Body of pancreas (tissue), 4 donors: ENCODE measurements at regions of chr9 and their contacts with region 1.

Region 1: DNA sequence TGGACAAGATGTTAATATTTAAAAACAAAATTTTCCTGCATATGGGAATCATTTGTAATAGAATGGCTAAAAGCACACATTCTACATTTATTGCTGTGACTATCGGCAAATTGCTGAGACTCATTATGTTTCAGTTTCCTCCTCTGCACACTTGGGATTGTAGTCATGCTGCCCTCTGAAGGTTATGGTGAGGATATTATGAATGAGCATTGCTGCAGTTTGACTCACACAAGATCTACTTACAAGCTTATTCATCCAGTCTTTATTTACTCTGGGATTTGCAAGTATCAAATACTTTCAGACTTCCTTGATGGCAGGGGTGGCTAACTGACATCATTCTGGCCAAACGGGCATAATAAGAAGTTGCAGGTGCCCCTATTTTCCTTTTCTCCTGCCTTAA is 9.5 kb upstream of the NFIL3 start:
- DNase-seq: peak in 1 of 4 donors; percentile 64
- ATAC-seq: peak; percentile 90
- H3K4me3 ChIP-seq: no peak overlapping the region
- H3K27ac ChIP-seq: no peak overlapping the region
- H3K4me1 ChIP-seq: no peaks in the 10 kb centered on the region
- H3K27me3 ChIP-seq: no peaks in the 10 kb centered on the region
- CTCF ChIP-seq: peak in 6 of 7 experiments; percentile 22 to 72 (median 60)
- POLR2A ChIP-seq: no peak

Region 2: DNA sequence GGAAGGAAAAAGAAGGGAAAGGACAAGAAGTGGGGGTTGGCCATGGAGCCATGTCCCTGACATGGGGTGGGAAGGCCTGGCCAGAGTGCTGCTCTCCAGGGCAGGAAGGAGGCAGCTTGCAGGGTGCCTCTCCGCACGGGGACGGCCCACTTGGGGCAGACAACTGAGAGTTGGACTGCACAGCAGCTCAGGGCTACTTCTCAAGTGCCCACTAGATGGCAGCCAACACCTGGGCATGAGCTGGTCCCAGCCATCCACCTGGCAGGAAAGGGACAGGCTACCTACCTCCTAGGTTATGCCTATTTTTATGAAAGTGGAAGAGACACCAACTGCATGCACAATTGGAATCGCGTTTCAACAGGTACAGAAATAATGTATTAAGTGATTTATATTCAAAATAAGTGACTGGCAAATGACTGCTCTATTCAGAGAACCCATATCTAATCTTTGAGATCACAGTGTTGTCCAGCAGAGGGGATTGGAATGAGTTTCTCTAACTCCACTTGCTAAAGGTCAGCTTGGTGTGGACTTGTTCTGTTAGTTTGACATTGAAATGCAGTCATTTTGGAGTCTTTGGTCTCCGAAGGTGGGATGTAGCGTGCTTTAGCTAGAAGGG is 518.2 kb before region 1 on chr9:
- intact Hi-C with region 1: loop called (anchors 5 kb)
- DNase-seq: peak; percentile 78 to 84 (median 80)
- ATAC-seq: peak; percentile 91
- H3K4me3 ChIP-seq: no peak overlapping the region
- H3K27ac ChIP-seq: no peak overlapping the region
- H3K4me1 ChIP-seq: no peaks in the 10 kb centered on the region
- H3K27me3 ChIP-seq: no peaks in the 10 kb centered on the region
- CTCF ChIP-seq: peak; percentile 85 to 97 (median 96)
- POLR2A ChIP-seq: no peak

Region 3: GRCh38 chr9:91029650-91030361 is 403.4 kb before region 1 on chr9:
- intact Hi-C with region 1: loop called (anchors 10 kb)
- DNase-seq: no peak
- ATAC-seq: no peak
- H3K4me3 ChIP-seq: no peak overlapping the region
- H3K27ac ChIP-seq: no peak overlapping the region
- H3K4me1 ChIP-seq: no peaks in the 10 kb centered on the region
- H3K27me3 ChIP-seq: no peaks in the 10 kb centered on the region
- CTCF ChIP-seq: no peak
- POLR2A ChIP-seq: no peak

Region 4: DNA sequence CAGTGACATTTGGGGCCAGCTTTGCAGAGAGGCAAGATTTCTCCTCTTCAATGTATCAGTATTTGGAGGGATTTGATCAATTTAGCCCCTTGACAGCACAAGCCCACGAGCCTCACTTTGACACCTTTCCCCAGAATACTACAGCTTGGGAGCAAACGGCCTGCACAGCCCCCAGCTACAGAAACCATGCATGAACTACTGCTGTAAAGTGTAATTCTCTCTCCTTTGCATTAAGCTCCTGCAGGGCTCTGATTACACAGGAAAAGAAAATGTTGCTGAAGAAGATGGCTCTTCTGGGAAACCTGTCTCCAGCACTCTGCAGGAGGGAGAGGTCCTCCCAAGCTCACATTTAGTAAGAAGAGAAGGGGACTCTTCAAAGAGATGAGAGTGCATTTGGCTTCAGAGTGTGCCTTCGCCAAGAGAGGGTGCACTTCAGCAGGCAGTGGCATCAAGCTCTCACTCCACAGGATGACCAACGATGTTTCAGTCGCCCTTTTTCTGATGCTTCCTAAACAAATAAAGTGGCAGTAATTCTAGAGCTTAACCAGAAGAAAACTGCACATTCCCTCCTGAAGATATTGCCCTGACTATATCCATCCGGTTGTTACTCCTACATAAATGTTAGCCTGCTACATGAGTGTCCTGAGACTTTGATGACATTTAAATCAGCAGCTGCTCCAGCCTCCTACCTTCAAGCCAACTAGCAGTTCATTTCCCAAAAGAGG is 343.6 kb before region 1 on chr9:
- intact Hi-C with region 1: loop called (anchors 10 kb)
- DNase-seq: peak in 3 of 4 donors; percentile 36 to 43 (median 39)
- ATAC-seq: peak; percentile 38
- H3K4me3 ChIP-seq: no peak overlapping the region
- H3K27ac ChIP-seq: no peak overlapping the region
- H3K4me1 ChIP-seq: no peaks in the 10 kb centered on the region
- H3K27me3 ChIP-seq: no peaks in the 10 kb centered on the region
- CTCF ChIP-seq: peak in 6 of 7 experiments; percentile 11 to 48 (median 39)
- POLR2A ChIP-seq: no peak